Mucosa of descending colon (tissue), 3 donors: ENCODE measurements at regions of chr12 and their contacts with region 1.

Region 1: DNA sequence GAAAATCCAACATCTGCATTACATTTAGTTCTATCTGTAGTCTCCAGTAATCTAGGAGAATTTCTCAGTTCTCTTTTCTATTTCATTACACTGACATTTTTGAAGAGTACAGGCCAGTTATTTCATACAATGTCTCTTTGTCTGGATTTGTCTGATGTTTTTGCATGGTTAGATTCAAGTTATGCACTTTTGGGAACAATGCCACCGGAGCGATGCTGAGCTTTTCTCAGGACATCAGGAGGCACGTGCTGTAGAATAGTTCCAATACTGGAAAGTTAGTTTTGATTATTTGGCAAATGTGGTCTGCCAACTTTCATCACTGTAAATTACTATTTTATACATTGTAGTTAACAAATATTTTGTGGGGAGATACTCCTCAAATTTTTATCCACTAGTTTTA is 43.1 kb downstream of the ALDH1L2 start:
- DNase-seq: no peak
- ATAC-seq: no peak
- H3K4me3 ChIP-seq: no peak overlapping the region
- H3K4me1 ChIP-seq: peaks cover 4% of the 10 kb centered on the region
- CTCF ChIP-seq: no peak

Region 2: GRCh38 chr12:104809706-104810385 is 231.3 kb before region 1 on chr12:
- intact Hi-C with region 1: no loop called
- DNase-seq: no peak
- ATAC-seq: no peak
- H3K4me3 ChIP-seq: no peak overlapping the region
- H3K4me1 ChIP-seq: no peaks in the 10 kb centered on the region
- CTCF ChIP-seq: no peak

Region 3: DNA sequence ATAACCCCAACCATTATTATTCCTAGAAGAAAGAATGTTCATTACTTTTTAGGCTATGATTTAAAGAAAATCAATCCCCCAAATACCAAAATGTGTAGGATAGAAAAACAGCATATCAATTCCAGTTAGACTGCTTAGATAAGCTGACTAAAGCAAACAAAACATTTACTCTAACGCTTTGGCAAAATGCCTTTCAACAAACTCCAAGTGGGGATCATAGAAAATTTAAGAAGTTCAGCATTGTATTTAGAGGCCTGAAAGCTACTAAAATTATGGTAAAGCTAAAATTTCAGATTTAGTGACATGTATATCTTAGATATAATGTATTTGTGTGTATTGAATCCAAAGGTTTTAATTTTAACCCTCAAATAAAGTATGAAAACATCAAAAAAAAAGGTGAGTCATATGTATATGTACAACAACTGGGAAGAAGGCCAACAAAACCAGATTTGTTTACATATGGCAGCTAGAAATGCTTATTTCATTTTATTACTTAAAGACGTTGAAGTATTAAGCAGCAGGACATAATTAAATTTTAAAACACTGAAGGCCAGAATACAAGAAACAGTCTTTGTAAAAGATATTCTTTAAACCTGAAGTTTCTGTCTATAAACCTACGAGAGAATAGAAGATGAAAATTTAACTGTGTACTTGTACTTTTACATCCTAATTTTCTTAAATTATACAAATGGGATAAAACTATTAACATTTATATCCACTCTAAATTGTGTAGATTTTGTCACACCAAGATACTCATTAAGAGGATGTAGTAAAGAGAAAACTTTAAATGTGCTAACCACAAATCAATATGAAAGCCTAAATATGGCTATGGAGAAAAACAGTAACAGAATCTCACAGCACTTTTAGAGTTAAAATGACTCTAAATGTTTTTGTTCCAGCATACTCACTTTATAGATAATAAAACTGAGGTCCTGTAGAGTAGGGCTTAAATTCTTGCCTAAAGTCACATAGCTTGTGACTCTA is 154.5 kb before region 1 on chr12:
- intact Hi-C with region 1: loop called in 1 of 2 experiments (anchors 10 kb)
- DNase-seq: no peak
- ATAC-seq: no peak
- H3K4me3 ChIP-seq: no peak overlapping the region
- H3K4me1 ChIP-seq: peaks cover 8% of the 10 kb centered on the region
- CTCF ChIP-seq: no peak

Region 4: DNA sequence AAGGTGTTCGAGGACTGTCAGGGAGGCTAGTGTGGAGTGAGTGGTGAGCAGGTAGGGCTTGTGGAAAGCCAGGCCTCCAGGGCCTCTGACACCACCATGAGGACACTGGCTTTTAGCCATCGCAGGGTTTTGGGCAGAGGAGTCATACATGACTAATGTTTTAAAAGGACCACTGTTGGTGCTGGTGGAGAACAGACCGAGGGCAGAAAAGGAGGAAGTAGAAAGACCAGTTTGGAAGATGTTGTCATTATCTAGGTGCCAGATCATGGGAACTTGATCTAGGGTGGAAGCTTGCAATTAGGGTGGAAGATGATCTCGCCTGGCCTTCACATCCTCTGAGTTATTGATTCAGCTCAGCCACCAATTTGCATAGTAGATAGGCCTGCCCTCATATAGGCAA is 433.5 kb after region 1 on chr12:
- intact Hi-C with region 1: no loop called
- DNase-seq: no peak
- ATAC-seq: no peak
- H3K4me3 ChIP-seq: no peak overlapping the region
- H3K4me1 ChIP-seq: no peaks in the 10 kb centered on the region
- CTCF ChIP-seq: no peak